K562 (cell line): ENCODE measurements at regions of chr2 and their contacts with region 1.

Region 1: GRCh38 chr2:147843864-147844696 is 749 bp upstream of the ACVR2A start:
- DNase-seq: peak; percentile 88 to 89 (median 88)
- ATAC-seq: peak; percentile 96
- H3K4me3 ChIP-seq: peak overlapping the region; percentile 69
- H3K27ac ChIP-seq: peak overlapping the region; percentile 72
- H3K4me1 ChIP-seq: peaks cover 5 to 19% of the 10 kb centered on the region in 2 experiments; a peak in 4 of 5 replicates
- H3K27me3 ChIP-seq: no peaks in the 10 kb centered on the region
- CTCF ChIP-seq: 0 out of 6 replicates have a peak, but pooled peaks of 1 of the 3 experiments have one; percentile 2
- EP300 ChIP-seq: no peak
- POLR2A ChIP-seq: peak; percentile 56; the same call in 1 of the 2 replicates
- RAD21 ChIP-seq: no peak

Region 2: DNA sequence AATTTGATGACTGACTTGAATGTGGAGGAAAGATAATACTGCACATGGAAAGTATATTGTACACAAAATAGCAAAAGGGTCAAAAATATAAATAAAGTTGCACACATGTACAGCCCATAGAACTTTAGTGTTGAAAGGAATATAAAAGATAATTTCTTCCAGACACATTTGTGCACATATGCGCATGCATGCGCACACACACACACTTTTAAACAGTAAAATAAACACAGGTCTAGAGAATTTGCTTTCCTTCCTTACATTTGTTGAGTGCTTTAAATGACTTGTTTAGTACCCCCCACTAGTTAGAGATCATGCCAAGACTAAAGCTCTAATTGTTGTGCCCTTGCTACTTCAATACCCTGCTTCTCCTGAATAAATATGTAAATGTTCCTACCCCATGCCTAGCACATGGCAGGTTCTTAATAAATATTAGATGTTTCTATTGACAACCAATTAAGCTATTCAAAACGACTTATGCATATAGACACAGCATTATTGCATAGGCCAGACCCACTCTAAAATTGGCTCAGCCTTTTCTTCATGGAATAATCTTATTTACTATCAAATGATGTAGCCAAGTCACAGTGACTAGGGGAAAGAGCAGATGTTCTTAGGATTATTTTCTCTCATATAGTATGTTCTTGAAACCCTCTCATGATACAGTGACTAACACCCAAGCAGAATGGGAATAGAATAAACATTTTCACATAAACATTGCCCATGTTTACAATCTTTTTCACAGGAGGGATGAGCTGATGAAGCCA is 164.7 kb before region 1 on chr2:
- CTCF ChIA-PET with region 1: no interaction called
- POLR2A ChIA-PET with region 1: no interaction called
- in situ Hi-C with region 1: no loop called
- intact Hi-C with region 1: no loop called
- DNase-seq: no peak
- ATAC-seq: no peak
- H3K4me3 ChIP-seq: no peak overlapping the region
- H3K27ac ChIP-seq: no peak overlapping the region
- H3K4me1 ChIP-seq: no peaks in the 10 kb centered on the region
- H3K27me3 ChIP-seq: no peaks in the 10 kb centered on the region
- CTCF ChIP-seq: no peak
- EP300 ChIP-seq: no peak
- POLR2A ChIP-seq: no peak
- RAD21 ChIP-seq: no peak

Region 3: DNA sequence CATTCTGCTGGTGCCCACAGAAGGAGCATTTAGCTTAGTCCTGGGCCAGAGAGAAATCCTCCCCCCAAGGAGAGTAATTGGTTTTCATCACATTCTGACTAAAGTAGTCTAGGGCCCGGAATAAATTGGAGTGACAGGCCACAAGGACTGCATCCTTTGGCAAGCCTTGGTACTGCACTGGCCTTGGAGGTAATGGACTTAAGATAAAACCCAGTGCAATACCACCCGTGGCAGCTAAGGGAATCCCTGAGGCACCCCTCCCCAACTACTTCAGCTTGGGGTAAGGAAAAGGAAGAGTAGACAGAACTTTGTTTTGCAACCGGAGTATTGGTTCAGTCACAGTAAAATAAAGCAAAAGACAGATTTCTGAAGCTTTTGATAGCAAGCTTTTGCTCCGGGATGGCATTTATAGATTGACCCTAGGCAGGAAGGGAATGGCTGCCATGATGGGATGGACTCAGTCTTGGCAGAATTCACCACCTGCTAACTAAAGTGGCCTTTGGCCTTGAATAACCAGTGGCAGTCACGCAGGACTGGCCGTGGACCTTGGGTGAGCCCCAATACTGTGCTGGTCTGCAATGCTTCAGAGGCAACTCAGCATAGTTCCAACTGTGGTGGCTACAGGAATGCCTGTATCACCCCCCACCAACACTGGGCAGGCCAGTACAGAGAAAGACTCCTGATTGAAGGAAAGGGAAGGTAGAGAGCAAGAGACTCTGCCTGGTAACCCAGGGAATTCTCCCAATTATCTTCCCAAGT is 162.3 kb after region 1 on chr2:
- CTCF ChIA-PET with region 1: no interaction called
- POLR2A ChIA-PET with region 1: no interaction called
- in situ Hi-C with region 1: no loop called
- intact Hi-C with region 1: no loop called
- DNase-seq: peak in 2 of 4 experiments; percentile 30 to 34
- ATAC-seq: peak; percentile 72
- H3K4me3 ChIP-seq: no peak overlapping the region
- H3K27ac ChIP-seq: no peak overlapping the region
- H3K4me1 ChIP-seq: no peaks in the 10 kb centered on the region
- H3K27me3 ChIP-seq: no peaks in the 10 kb centered on the region
- CTCF ChIP-seq: no peak; a peak in 1 of 6 replicates
- EP300 ChIP-seq: no peak
- POLR2A ChIP-seq: no peak
- RAD21 ChIP-seq: no peak

Region 4: DNA sequence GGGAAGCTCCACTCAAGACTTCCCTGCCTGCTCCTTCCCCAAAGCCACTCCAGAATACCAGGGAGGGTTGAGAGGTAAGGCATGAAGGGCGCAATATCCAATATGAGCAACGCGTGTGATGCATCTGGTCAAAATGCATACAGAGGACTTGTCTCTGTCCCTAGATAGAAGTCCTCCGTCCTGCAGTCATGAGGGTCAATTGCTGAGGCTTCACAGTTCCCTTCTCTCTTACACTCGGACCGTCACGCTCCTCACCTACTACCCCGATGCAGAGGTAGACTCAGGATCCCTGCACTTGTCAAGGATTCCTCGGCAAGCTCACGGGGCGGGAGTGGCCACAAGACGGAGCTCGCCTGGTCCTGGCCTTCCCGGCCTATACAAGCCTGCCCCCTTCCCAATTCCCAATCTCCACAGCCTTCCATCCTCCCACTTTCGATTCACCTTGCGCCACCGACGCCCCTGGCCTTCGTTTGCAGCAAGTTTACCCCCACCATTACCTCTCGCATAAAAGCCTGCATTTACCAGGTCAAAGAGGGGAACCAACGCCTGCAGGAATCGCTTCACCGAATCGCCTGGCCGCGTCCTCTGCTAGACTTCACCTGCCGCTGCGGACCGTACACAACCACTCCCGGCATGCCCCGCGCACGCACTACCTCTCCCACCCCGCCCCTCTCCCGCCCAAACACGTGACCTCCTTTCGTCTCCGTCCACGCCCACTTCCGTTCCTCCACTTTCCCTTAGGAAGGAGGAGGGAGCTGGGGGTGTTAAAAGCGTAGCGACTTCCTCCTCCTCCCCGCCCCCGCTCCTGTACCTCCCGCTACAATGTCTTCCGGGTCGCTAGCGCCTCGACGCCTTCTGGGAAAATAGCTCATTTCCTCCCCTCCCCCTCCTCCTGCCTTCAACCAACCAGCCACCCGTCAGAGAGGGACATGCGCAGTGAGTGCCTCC is 176.3 kb after region 1 on chr2 and contains the start of gene ORC4:
- CTCF ChIA-PET with region 1: no interaction called
- POLR2A ChIA-PET with region 1: interaction called, 3 read pairs
- in situ Hi-C with region 1: no loop called
- intact Hi-C with region 1: loop called (anchors 5 kb)
- DNase-seq: peak; percentile 91 to 99 (median 92)
- ATAC-seq: peak; percentile 83
- H3K4me3 ChIP-seq: peak within 1 kb of the TSS; percentile 82
- H3K27ac ChIP-seq: peak within 1 kb of the TSS; percentile 89
- H3K4me1 ChIP-seq: peaks cover 0 to 6% of the 10 kb centered on the region in 2 experiments; a peak in 2 of 5 replicates
- H3K27me3 ChIP-seq: no peaks in the 10 kb centered on the region
- CTCF ChIP-seq: peak; percentile 52 to 67 (median 53)
- EP300 ChIP-seq: peak; percentile 49; the same call in 1 of the 2 replicates
- POLR2A ChIP-seq: peak; percentile 90
- RAD21 ChIP-seq: peak; percentile 26 to 48; a peak in 3 of 4 replicates
- polyA plus RNA-seq, gene ORC4: 86.8 to 90.0 TPM